ENCODE measurements at regions of chr13 and their contacts with region 1.

Region 1: DNA sequence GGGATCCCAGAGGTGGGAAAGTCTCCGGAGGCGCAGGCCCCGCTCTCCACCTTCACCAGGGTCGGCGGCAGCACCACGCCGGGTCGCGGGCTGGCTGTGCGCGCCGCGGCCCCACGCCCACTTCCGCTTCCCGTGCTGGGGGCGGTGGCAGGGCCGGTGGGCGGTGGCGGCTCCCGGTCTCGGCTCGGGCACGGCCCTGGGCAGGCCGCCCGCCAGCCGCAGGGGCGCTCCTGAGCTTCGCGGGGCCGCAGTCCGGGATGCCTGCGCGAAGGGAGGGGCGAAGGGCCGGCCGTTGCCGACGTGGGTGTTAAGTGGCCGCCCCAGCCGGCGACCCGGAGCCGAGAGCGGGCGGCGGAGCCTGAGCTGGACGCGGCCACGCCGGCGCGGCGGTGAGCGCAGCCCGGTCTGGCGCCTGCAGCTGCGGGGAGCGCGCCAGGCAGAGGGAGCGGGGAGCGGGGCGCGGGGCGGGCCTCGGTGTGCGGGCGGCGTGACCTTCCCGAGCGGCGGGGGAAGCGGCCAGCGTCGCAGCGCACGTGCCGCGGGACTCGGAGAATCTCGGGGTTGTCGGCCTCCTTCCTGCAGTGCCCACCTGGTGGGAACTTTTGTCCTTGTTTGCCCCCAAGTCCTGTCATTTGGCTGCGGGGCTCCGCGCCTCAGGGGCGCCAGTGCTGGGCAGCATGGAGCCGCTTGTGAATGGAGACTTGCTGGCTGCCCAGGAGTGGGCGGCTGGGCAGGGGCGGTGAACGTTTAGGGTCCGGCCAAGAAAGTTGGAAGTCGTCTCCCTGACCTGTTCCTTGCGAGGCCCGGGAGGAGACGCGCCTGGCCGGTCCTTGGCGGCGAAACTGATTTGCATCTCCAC is at the start of gene SLC25A15:
- DNase-seq: peak; percentile 86
- ATAC-seq: peak; percentile 88
- H3K4me3 Mint-ChIP-seq: peak within 1 kb of the TSS; percentile 83
- H3K27ac Mint-ChIP-seq: peak within 1 kb of the TSS; percentile 56
- H3K4me1 Mint-ChIP-seq: peaks cover 29% of the 10 kb centered on the region
- H3K27me3 Mint-ChIP-seq: no peaks in the 10 kb centered on the region
- total RNA-seq, gene SLC25A15: 12.3 to 12.5 TPM

Region 2: DNA sequence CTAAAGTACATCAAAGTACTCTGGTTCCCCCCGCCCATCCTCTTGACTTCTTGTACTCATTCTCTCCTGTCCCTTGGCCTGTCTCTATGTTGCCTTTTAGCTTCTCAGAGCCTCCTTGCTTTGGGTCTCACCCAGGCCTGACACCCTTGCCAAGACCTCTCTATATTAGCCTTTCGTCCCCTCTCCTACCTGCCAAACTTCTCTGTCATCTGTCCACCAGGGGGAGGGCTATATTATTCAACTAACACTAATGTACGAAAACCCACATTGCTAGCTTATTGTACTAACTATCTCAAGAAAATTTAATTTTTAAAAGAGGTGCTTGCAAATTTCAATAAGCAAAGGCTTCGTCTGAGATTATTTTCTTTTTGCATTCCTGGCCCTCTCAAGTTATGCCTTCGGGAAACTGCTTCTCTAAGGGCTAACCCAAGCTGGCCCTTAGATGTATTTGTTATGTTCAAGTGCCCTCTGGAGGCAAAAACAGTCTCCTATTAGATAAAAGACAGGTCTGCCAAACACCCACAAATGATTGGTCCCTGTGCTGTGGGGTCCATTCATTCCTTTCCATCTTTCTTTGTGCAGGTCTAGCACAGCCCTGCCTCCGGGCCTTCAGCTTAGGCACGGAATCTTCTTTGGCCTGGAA is 12.2 kb before region 1 on chr13:
- POLR2A ChIA-PET with region 1: interaction called, 10 read pairs
- DNase-seq: peak; percentile 55
- ATAC-seq: peak; percentile 69
- H3K4me3 Mint-ChIP-seq: peak overlapping the region; percentile 86
- H3K27ac Mint-ChIP-seq: peak overlapping the region; percentile 100
- H3K4me1 Mint-ChIP-seq: peaks cover 31% of the 10 kb centered on the region
- H3K27me3 Mint-ChIP-seq: no peaks in the 10 kb centered on the region

Region 3: DNA sequence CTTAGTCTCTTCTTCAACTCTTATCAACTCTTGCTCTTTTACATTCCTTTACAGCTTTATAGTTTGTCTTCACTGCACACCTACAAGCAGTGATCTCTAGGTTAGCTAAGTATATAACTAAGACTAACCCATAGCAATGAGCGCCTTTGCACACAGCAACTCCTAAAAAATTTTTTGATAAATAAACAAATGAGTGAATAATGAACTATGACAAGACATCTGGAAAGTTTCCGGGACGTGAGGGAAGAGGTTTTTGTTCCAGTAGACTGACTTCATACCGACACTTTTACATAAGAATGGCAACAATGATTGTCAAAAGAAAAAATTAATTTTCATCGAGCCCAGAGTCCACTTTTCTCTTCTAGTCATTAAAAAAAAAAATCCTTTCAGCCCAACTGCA is 131.3 kb after region 1 on chr13:
- POLR2A ChIA-PET with region 1: interaction called, 11 read pairs
- DNase-seq: no peak
- ATAC-seq: no peak
- H3K4me3 Mint-ChIP-seq: peak overlapping the region; percentile 89
- H3K27ac Mint-ChIP-seq: peak overlapping the region; percentile 85
- H3K4me1 Mint-ChIP-seq: peaks cover 16% of the 10 kb centered on the region
- H3K27me3 Mint-ChIP-seq: no peaks in the 10 kb centered on the region

Region 4: GRCh38 chr13:40969169-40969901 is 179.8 kb after region 1 on chr13:
- POLR2A ChIA-PET with region 1: no interaction called
- DNase-seq: no peak
- ATAC-seq: peak; percentile 78
- H3K4me3 Mint-ChIP-seq: peak overlapping the region; percentile 2
- H3K27ac Mint-ChIP-seq: no peak overlapping the region
- H3K4me1 Mint-ChIP-seq: peaks cover 70% of the 10 kb centered on the region
- H3K27me3 Mint-ChIP-seq: no peaks in the 10 kb centered on the region

Measured in activated naive CD8-positive, alpha-beta T cell treated with anti-CD3 and anti-CD28 coated beads, Interleukin-2, amount 10 ng/mL, durations not matched to agents 7 days and 5 days (primary cell).